CD8-positive, alpha-beta T cell (primary cell): ENCODE measurements at regions of chr5 and their contacts with region 1.

Region 1: GRCh38 chr5:180470966-180471582 is 23.1 kb upstream of the CNOT6 start:
- DNase-seq: peak; percentile 16 to 80 (median 61)
- ATAC-seq: peak; percentile 94
- H3K4me3 ChIP-seq: no peak overlapping the region
- H3K4me3 Mint-ChIP-seq: no peak overlapping the region
- H3K27ac ChIP-seq: no peak overlapping the region
- H3K27ac Mint-ChIP-seq: no peak overlapping the region
- H3K4me1 ChIP-seq: no peaks in the 10 kb centered on the region
- H3K4me1 Mint-ChIP-seq: no peaks in the 10 kb centered on the region
- H3K27me3 ChIP-seq: no peaks in the 10 kb centered on the region
- H3K27me3 Mint-ChIP-seq: peaks cover 2% of the 10 kb centered on the region
- CTCF ChIP-seq: peak; percentile 86

Region 2: GRCh38 chr5:180126726-180127681 is 344.1 kb before region 1 on chr5:
- CTCF ChIA-PET with region 1: no interaction called
- POLR2A ChIA-PET with region 1: no interaction called
- intact Hi-C with region 1: loop called (anchors 2 to 5 kb)
- DNase-seq: peak in 5 of 9 experiments; percentile 28 to 56 (median 44)
- ATAC-seq: no peak
- H3K4me3 ChIP-seq: no peak overlapping the region
- H3K4me3 Mint-ChIP-seq: no peak overlapping the region
- H3K27ac ChIP-seq: no peak overlapping the region
- H3K27ac Mint-ChIP-seq: no peak overlapping the region
- H3K4me1 ChIP-seq: no peaks in the 10 kb centered on the region
- H3K4me1 Mint-ChIP-seq: no peaks in the 10 kb centered on the region
- H3K27me3 ChIP-seq: no peaks in the 10 kb centered on the region
- H3K27me3 Mint-ChIP-seq: peaks cover 14% of the 10 kb centered on the region
- CTCF ChIP-seq: peak; percentile 77

Region 3: GRCh38 chr5:180201051-180201987 is 269.8 kb before region 1 on chr5:
- CTCF ChIA-PET with region 1: no interaction called
- POLR2A ChIA-PET with region 1: no interaction called
- intact Hi-C with region 1: loop called in 1 of 2 experiments (anchors 2 kb)
- DNase-seq: peak in 1 of 9 experiments; percentile 33
- ATAC-seq: no peak
- H3K4me3 ChIP-seq: no peak overlapping the region
- H3K4me3 Mint-ChIP-seq: no peak overlapping the region
- H3K27ac ChIP-seq: no peak overlapping the region
- H3K27ac Mint-ChIP-seq: no peak overlapping the region
- H3K4me1 ChIP-seq: no peaks in the 10 kb centered on the region
- H3K4me1 Mint-ChIP-seq: no peaks in the 10 kb centered on the region
- H3K27me3 ChIP-seq: peaks cover 0 to 6% of the 10 kb centered on the region in 2 experiments
- H3K27me3 Mint-ChIP-seq: peaks cover 36% of the 10 kb centered on the region
- CTCF ChIP-seq: no peak

Region 4: DNA sequence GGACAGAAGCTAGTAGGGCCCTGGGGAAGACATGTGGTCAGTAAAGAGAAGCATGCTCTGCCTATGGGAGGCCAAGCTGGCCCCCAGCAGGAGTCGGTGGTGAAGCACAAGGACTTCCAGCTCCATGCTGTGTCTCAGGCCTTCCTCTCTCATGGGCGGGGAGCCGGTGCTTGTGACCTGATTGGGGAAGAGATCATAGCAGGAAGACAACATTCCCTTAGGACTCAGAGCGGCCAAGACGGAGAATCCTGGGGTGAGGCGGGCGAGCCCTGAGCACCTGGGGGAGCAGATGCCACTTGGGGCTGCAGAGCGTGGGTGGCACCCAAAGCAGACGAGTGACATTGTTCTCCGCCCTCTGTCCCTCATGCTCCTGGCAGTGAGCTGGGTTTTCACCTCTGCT is 10.2 kb before region 1 on chr5:
- CTCF ChIA-PET with region 1: interaction called, 12 read pairs
- POLR2A ChIA-PET with region 1: no interaction called
- intact Hi-C with region 1: no loop called
- DNase-seq: no peak
- ATAC-seq: no peak
- H3K4me3 ChIP-seq: no peak overlapping the region
- H3K4me3 Mint-ChIP-seq: no peak overlapping the region
- H3K27ac ChIP-seq: no peak overlapping the region
- H3K27ac Mint-ChIP-seq: no peak overlapping the region
- H3K4me1 ChIP-seq: no peaks in the 10 kb centered on the region
- H3K4me1 Mint-ChIP-seq: no peaks in the 10 kb centered on the region
- H3K27me3 ChIP-seq: no peaks in the 10 kb centered on the region
- H3K27me3 Mint-ChIP-seq: peaks cover 8% of the 10 kb centered on the region
- CTCF ChIP-seq: no peak

Region 5: GRCh38 chr5:180670586-180671359 is 199.7 kb after region 1 on chr5:
- CTCF ChIA-PET with region 1: no interaction called
- POLR2A ChIA-PET with region 1: no interaction called
- intact Hi-C with region 1: loop called in 1 of 2 experiments (anchors 5 kb)
- DNase-seq: peak in 8 of 9 experiments; percentile 28 to 76 (median 51)
- ATAC-seq: peak; percentile 70
- H3K4me3 ChIP-seq: no peak overlapping the region
- H3K4me3 Mint-ChIP-seq: peak overlapping the region; percentile 40
- H3K27ac ChIP-seq: no peak overlapping the region
- H3K27ac Mint-ChIP-seq: no peak overlapping the region
- H3K4me1 ChIP-seq: peaks cover 6% of the 10 kb centered on the region
- H3K4me1 Mint-ChIP-seq: peaks cover 18% of the 10 kb centered on the region
- H3K27me3 ChIP-seq: peaks cover 2 to 3% of the 10 kb centered on the region in 2 experiments
- H3K27me3 Mint-ChIP-seq: peaks cover 7% of the 10 kb centered on the region
- CTCF ChIP-seq: peak; percentile 55